ENCODE measurements at regions of chr3 and their contacts with region 1.

Region 1: DNA sequence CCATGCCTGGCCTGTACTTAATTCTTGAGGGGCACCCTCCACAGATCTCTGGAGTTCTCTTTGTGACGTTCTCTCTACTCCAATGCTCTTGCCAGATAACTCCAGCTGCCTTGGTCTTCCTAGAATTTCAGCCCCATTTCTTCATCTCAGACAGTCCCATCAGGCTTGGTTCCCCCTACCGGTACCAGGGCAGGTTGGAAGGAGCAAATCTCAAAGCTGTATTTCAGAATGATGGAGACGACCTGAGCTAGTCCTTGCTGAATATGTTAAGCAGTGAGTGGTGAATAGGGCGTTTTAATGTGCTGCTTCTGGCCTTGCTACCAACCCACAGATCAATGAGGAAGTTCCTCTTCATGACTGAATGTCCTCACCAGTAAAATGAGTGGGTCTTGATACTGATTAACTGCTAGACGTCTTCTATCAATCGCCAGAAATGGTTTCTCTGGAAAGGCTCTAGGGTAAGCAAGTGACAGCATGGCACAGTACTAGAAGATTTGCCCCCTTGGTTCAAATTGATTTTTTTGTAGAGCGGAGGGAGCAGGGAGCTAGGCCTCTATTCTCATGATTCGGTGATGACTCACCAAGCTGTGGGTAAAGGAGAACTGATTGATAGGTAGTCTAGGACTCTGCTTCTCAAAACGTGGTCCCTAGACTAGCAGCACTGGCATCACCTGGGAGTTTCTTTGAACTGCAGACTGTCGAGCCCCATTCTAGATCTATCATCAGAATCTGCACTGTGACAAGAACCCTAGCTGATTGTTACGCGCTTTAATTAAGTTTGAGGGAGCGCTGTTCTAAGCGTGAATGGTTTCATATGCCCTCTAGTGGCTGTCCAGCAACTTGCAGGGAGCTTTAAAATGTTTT is 67.8 kb downstream of the UBP1 start:
- DNase-seq: peak in 8 of 9 experiments; percentile 25 to 60 (median 43)
- ATAC-seq: peak; percentile 62
- H3K4me3 ChIP-seq: no peak overlapping the region
- H3K4me3 Mint-ChIP-seq: no peak overlapping the region
- H3K27ac ChIP-seq: no peak overlapping the region
- H3K27ac Mint-ChIP-seq: no peak overlapping the region
- H3K4me1 ChIP-seq: no peaks in the 10 kb centered on the region
- H3K4me1 Mint-ChIP-seq: peaks cover 3% of the 10 kb centered on the region
- H3K27me3 ChIP-seq: peaks cover 0 to 4% of the 10 kb centered on the region in 2 experiments
- H3K27me3 Mint-ChIP-seq: peaks cover 16% of the 10 kb centered on the region
- CTCF ChIP-seq: peak; percentile 98

Region 2: GRCh38 chr3:32420126-32421038 is 952.1 kb before region 1 on chr3:
- CTCF ChIA-PET with region 1: no interaction called
- POLR2A ChIA-PET with region 1: no interaction called
- intact Hi-C with region 1: no loop called
- DNase-seq: peak in 4 of 9 experiments; percentile 30 to 59 (median 49)
- ATAC-seq: peak; percentile 60
- H3K4me3 ChIP-seq: peak overlapping the region in 1 of 2 experiments; percentile 0
- H3K4me3 Mint-ChIP-seq: peak overlapping the region; percentile 73
- H3K27ac ChIP-seq: peak overlapping the region; percentile 15 to 54
- H3K27ac Mint-ChIP-seq: peak overlapping the region; percentile 98
- H3K4me1 ChIP-seq: peaks cover 91% of the 10 kb centered on the region
- H3K4me1 Mint-ChIP-seq: peaks cover 93% of the 10 kb centered on the region
- H3K27me3 ChIP-seq: no peaks in the 10 kb centered on the region
- H3K27me3 Mint-ChIP-seq: no peaks in the 10 kb centered on the region
- CTCF ChIP-seq: no peak

Region 3: DNA sequence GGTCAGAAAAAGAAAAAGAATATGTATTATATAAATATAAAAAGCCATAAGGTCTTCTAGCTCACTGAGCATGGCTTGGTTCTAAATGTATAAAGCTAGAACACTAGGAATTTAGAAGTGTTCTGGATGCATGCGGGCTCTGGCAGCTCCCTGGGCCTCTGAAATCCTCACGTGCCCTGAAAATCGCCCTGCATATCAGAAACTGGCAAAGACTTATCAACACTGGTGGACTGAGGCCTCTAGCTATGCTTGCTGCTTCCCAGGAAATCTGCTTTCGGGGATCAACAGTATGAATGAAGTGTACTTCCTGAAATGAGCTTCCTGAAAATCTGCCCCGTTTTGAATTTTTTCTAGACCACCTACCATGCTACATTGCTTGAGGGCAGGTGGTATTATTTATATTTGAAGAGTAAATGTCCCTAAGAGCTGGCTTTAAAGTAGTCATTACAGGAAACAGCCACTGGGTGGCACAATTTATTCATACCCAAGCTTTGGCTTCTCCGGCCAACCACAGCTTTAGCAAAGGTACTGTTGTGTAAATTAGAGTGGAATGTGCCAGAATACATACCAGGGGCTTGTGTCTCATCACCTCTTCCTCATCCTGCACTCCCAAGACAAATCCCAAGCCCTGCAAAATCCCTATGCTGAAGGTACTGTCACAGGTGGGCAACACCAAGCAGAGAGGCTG is 241.0 kb before region 1 on chr3:
- CTCF ChIA-PET with region 1: interaction called, 23 read pairs
- POLR2A ChIA-PET with region 1: no interaction called
- intact Hi-C with region 1: loop called (anchors 1 to 5 kb)
- DNase-seq: peak in 4 of 9 experiments; percentile 21 to 61 (median 40)
- ATAC-seq: peak; percentile 69
- H3K4me3 ChIP-seq: no peak overlapping the region
- H3K4me3 Mint-ChIP-seq: no peak overlapping the region
- H3K27ac ChIP-seq: no peak overlapping the region
- H3K27ac Mint-ChIP-seq: no peak overlapping the region
- H3K4me1 ChIP-seq: no peaks in the 10 kb centered on the region
- H3K4me1 Mint-ChIP-seq: peaks cover 3% of the 10 kb centered on the region
- H3K27me3 ChIP-seq: no peaks in the 10 kb centered on the region
- H3K27me3 Mint-ChIP-seq: no peaks in the 10 kb centered on the region
- CTCF ChIP-seq: peak; percentile 84

Region 4: GRCh38 chr3:33250712-33251111 is 121.7 kb before region 1 on chr3:
- CTCF ChIA-PET with region 1: no interaction called
- POLR2A ChIA-PET with region 1: no interaction called
- intact Hi-C with region 1: no loop called
- DNase-seq: no peak
- ATAC-seq: no peak
- H3K4me3 ChIP-seq: no peak overlapping the region
- H3K4me3 Mint-ChIP-seq: no peak overlapping the region
- H3K27ac ChIP-seq: no peak overlapping the region
- H3K27ac Mint-ChIP-seq: no peak overlapping the region
- H3K4me1 ChIP-seq: no peaks in the 10 kb centered on the region
- H3K4me1 Mint-ChIP-seq: no peaks in the 10 kb centered on the region
- H3K27me3 ChIP-seq: no peaks in the 10 kb centered on the region
- H3K27me3 Mint-ChIP-seq: peaks cover 9% of the 10 kb centered on the region
- CTCF ChIP-seq: no peak

Region 5: GRCh38 chr3:33385423-33385822 is 13.0 kb after region 1 on chr3:
- CTCF ChIA-PET with region 1: interaction called, 12 read pairs
- POLR2A ChIA-PET with region 1: no interaction called
- intact Hi-C with region 1: no loop called
- DNase-seq: peak in 5 of 9 experiments; percentile 14 to 33 (median 16)
- ATAC-seq: peak; percentile 51
- H3K4me3 ChIP-seq: no peak overlapping the region
- H3K4me3 Mint-ChIP-seq: no peak overlapping the region
- H3K27ac ChIP-seq: no peak overlapping the region
- H3K27ac Mint-ChIP-seq: peak overlapping the region; percentile 50
- H3K4me1 ChIP-seq: no peaks in the 10 kb centered on the region
- H3K4me1 Mint-ChIP-seq: peaks cover 9% of the 10 kb centered on the region
- H3K27me3 ChIP-seq: no peaks in the 10 kb centered on the region
- H3K27me3 Mint-ChIP-seq: no peaks in the 10 kb centered on the region
- CTCF ChIP-seq: no peak

Measured in CD8-positive, alpha-beta T cell (primary cell).